ENCODE measurements at regions of chr4 and their contacts with region 1.

Region 1: GRCh38 chr4:74531963-74532794 is 87.2 kb downstream of the AREG start:
- DNase-seq: no peak
- ATAC-seq: peak; percentile 68
- H3K4me3 Mint-ChIP-seq: no peak overlapping the region
- H3K27ac Mint-ChIP-seq: no peak overlapping the region
- H3K4me1 Mint-ChIP-seq: no peaks in the 10 kb centered on the region
- H3K27me3 Mint-ChIP-seq: peaks cover 2% of the 10 kb centered on the region
- CTCF ChIP-seq: no peak

Region 2: GRCh38 chr4:74189331-74190043 is 342.7 kb before region 1 on chr4:
- CTCF ChIA-PET with region 1: interaction called, 5 read pairs
- POLR2A ChIA-PET with region 1: no interaction called
- intact Hi-C with region 1: loop called (anchors 1 kb)
- DNase-seq: no peak
- ATAC-seq: peak; percentile 56
- H3K4me3 Mint-ChIP-seq: no peak overlapping the region
- H3K27ac Mint-ChIP-seq: no peak overlapping the region
- H3K4me1 Mint-ChIP-seq: no peaks in the 10 kb centered on the region
- H3K27me3 Mint-ChIP-seq: no peaks in the 10 kb centered on the region
- CTCF ChIP-seq: no peak

Region 3: DNA sequence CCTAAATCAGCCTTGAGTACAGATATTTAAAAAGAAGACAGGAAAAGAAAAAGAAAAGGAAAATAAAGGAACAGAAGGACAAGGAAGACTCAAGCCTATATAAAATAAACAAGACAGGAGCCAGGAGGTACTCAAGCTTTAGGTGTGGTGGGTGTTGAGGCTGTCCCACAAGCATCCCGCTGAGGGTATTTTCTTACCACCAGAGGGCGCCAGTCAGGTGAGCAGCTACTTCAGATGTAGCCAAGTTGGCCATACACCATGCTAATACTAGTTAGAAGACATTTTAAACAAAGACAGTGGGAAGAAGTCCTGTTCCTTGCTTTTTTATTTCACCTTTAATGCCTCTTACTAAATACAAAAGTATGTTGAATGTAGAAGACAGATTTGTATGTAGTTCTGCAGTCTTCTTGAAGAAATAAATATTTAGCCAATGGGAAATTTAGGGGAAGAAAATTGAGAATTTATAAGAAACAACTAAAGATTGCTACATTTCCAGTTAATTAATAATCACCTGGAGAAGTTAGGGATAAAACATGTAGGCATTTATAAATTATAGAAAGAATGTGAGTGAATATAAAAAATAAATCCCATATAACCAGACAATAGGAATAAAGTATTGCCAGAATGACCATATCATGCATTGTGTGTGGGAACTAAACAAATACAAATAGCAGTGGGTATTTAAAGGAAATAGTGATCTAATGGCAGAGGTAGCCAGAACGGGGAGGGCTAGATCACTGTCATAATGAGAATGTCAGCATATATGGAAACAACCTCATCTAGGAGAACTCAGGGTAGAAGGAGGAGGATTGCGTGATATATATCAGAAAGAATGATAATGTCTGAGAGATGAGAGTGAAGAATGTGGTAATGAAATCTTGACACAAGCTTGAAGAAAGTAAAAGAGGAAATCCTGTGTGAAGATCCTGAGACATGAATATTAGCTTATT is 303.2 kb before region 1 on chr4:
- CTCF ChIA-PET with region 1: interaction called, 6 read pairs
- POLR2A ChIA-PET with region 1: no interaction called
- intact Hi-C with region 1: loop called (anchors 2 kb)
- DNase-seq: peak; percentile 36
- ATAC-seq: peak; percentile 78
- H3K4me3 Mint-ChIP-seq: no peak overlapping the region
- H3K27ac Mint-ChIP-seq: no peak overlapping the region
- H3K4me1 Mint-ChIP-seq: no peaks in the 10 kb centered on the region
- H3K27me3 Mint-ChIP-seq: no peaks in the 10 kb centered on the region
- CTCF ChIP-seq: peak; percentile 60

Region 4: DNA sequence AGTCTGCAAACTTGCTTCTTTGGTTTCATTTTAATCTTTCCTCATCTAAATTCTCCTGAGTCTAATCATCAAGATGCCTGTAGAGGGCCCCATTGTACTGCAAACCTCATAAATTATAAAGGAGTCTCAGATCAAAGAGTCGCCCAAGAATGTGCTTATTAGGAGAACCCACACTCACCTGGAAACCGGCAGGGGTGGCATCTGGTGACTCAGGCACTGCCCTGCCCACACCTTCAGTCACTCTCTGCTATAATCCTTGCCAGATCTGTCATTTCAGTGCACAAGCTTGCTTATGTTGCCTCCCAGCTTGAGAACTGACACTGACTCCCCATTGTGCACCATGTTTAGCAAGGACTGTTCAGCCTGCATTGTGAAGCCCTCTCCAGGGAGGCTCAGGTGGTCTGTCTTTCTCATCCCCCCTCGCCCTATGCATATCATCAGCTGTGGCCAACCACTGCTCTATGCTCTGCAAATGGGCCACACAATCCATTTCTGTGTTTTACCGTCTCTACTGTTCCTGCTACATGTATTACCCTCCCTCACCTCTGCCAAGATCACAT is 211.5 kb before region 1 on chr4:
- CTCF ChIA-PET with region 1: interaction called, 5 read pairs
- POLR2A ChIA-PET with region 1: no interaction called
- intact Hi-C with region 1: loop called (anchors 2 kb)
- DNase-seq: no peak
- ATAC-seq: peak; percentile 28
- H3K4me3 Mint-ChIP-seq: no peak overlapping the region
- H3K27ac Mint-ChIP-seq: no peak overlapping the region
- H3K4me1 Mint-ChIP-seq: no peaks in the 10 kb centered on the region
- H3K27me3 Mint-ChIP-seq: peaks cover 25% of the 10 kb centered on the region
- CTCF ChIP-seq: no peak

Region 5: DNA sequence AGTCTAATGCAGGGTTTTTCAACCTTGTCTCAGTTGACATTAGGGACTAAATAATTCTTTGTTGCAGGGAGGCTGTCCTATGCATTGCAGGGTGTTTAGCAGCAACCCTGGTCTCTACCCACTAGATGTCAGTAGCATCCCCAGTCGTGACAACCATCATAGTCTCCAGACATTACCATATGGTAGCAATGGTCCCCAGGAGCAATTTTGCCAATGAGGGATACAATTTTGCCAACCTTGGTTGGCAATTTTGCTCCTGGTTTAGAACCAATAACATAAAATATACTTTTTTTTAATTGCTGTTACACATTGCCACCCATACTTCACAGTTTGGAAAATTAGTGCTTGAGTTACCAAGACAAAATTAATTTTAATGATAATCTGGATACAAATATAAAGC is 161.3 kb before region 1 on chr4:
- CTCF ChIA-PET with region 1: interaction called, 55 read pairs
- POLR2A ChIA-PET with region 1: no interaction called
- intact Hi-C with region 1: no loop called
- DNase-seq: no peak
- ATAC-seq: peak; percentile 71
- H3K4me3 Mint-ChIP-seq: no peak overlapping the region
- H3K27ac Mint-ChIP-seq: no peak overlapping the region
- H3K4me1 Mint-ChIP-seq: no peaks in the 10 kb centered on the region
- H3K27me3 Mint-ChIP-seq: peaks cover 15% of the 10 kb centered on the region
- CTCF ChIP-seq: no peak

Region 6: GRCh38 chr4:74376888-74377483 is 155.2 kb before region 1 on chr4:
- CTCF ChIA-PET with region 1: interaction called, 55 read pairs
- POLR2A ChIA-PET with region 1: interaction called, 8 read pairs
- intact Hi-C with region 1: loop called (anchors 1 kb)
- DNase-seq: no peak
- ATAC-seq: peak; percentile 52
- H3K4me3 Mint-ChIP-seq: no peak overlapping the region
- H3K27ac Mint-ChIP-seq: no peak overlapping the region
- H3K4me1 Mint-ChIP-seq: no peaks in the 10 kb centered on the region
- H3K27me3 Mint-ChIP-seq: peaks cover 2% of the 10 kb centered on the region
- CTCF ChIP-seq: peak; percentile 63

Region 7: DNA sequence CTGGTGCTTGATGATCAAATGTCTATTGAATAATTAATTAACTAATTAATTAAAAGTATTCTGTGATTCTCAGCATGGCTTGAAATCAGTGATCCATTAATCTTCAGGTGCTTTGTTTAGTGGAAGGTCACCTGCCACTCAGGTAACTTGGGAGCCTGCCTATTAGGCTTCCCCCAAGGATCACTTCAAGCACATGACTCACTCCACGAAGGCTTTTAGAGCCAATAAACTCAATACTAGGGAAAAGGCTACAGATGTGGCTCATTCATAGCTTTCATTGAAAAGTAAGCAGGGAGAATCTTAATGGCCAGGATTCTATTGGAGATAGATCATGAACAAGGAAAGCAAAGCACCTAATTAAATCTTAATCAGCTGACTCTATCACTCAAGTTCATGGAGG is 65.9 kb before region 1 on chr4:
- CTCF ChIA-PET with region 1: no interaction called
- POLR2A ChIA-PET with region 1: no interaction called
- intact Hi-C with region 1: no loop called
- DNase-seq: no peak
- ATAC-seq: no peak
- H3K4me3 Mint-ChIP-seq: no peak overlapping the region
- H3K27ac Mint-ChIP-seq: no peak overlapping the region
- H3K4me1 Mint-ChIP-seq: no peaks in the 10 kb centered on the region
- H3K27me3 Mint-ChIP-seq: peaks cover 7% of the 10 kb centered on the region
- CTCF ChIP-seq: no peak

Region 8: DNA sequence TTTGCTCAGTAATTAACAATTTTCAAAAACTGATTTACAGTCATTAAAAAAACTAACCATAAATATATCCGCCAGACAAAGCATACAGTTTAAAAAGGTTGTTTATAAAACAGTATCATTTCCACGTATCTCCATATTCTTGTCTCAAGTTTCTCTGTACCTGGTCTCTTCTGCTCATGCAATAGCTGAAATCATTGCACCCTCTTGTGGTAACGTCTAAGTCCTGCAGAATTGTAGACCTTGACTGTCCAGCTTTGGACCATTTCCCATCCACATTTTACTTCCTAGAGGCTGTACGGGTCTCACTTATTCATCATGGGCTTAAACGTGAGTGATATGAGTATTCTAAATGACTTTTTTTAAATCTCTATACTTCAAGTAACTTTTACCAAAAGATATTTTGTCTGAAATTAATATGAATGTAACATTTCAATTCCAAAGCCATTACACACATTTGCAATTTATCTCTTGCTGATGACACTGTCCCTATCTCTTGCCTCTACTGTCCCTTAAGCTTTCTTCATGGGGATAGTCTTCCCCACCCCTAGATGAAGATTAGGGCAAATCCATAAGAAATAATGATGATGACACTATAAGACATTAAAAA is 143.6 kb after region 1 on chr4:
- CTCF ChIA-PET with region 1: no interaction called
- POLR2A ChIA-PET with region 1: no interaction called
- intact Hi-C with region 1: loop called (anchors 2 kb)
- DNase-seq: no peak
- ATAC-seq: peak; percentile 65
- H3K4me3 Mint-ChIP-seq: no peak overlapping the region
- H3K27ac Mint-ChIP-seq: no peak overlapping the region
- H3K4me1 Mint-ChIP-seq: no peaks in the 10 kb centered on the region
- H3K27me3 Mint-ChIP-seq: peaks cover 9% of the 10 kb centered on the region
- CTCF ChIP-seq: no peak